Upper lobe of right lung (tissue), 1 donor: ENCODE measurements at regions of chr21 and their contacts with region 1.

Region 1: DNA sequence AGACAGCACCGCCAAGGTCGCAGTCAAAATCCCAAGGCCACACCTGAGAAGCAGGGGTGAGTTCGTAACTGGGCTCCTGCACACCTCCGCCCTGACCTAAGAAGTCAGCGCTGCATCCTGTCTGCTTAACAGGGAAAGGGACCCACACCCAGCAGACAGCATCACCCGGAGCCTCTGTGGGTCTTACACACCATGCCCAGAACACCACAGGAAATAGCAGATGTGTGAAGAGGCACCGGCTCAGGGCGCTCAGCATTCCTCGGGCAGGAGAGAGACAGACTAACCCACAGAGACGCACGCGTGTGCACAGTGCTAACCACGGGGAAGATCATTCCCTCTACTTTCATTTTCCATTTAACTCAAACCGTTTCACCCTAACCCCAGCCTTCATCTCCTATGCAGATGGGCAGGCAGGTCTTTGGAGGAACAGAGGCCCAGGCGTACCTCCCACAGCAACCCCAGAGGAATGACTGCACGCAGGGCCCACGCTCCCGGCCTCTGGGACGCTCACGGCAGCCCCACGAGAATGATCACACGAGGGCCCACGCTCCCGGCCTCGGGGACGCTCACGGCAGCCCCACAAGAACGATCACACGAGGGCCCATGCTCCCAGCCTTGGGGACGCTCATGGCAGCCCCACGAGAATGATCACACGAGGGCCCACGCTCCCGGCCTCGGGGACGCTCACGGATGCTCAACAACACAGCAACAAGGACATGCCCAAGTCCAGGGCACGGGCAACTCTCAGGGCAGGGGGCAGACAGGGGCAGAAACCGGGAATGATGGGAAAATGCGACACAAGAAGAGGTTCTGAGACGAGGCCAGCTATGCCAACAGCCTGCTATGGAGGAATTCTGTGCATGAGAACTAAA is 20.9 kb downstream of the POFUT2 start:
- DNase-seq: peak; percentile 38
- ATAC-seq: peak; percentile 28
- H3K4me3 ChIP-seq: no peak overlapping the region
- H3K27ac ChIP-seq: no peak overlapping the region
- H3K4me1 ChIP-seq: no peaks in the 10 kb centered on the region
- H3K27me3 ChIP-seq: no peaks in the 10 kb centered on the region
- CTCF ChIP-seq: no peak

Region 2: GRCh38 chr21:45098867-45099266 is 167.9 kb before region 1 on chr21:
- intact Hi-C with region 1: no loop called
- DNase-seq: no peak
- ATAC-seq: no peak
- H3K4me3 ChIP-seq: no peak overlapping the region
- H3K27ac ChIP-seq: no peak overlapping the region
- H3K4me1 ChIP-seq: peaks cover 56% of the 10 kb centered on the region
- H3K27me3 ChIP-seq: no peaks in the 10 kb centered on the region
- CTCF ChIP-seq: peak; percentile 22

Region 3: GRCh38 chr21:45209046-45209445 is 57.7 kb before region 1 on chr21:
- intact Hi-C with region 1: loop called (anchors 5 kb)
- DNase-seq: no peak
- ATAC-seq: no peak
- H3K4me3 ChIP-seq: no peak overlapping the region
- H3K27ac ChIP-seq: no peak overlapping the region
- H3K4me1 ChIP-seq: no peaks in the 10 kb centered on the region
- H3K27me3 ChIP-seq: no peaks in the 10 kb centered on the region
- CTCF ChIP-seq: no peak